Lower leg skin (tissue), 4 donors: ENCODE measurements at regions of chr1 and their contacts with region 1.

Region 1: DNA sequence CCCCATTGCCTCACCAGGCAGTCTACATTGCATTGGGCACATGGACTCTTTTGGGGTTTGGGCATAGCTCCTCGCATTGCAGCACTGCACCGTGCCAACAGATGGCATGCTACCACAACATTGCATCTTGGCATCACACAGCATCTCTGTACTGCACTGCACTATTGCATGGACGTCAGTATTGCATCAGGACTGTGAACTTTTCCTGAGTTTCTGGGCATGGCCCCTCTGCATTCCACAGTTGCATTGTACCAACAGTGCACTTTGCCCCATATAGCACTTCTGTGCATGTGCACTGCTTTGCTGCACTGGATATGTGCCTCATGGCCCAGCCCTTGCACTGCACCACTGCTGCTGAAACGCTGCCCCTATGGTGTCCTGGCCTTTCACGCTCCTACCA is 9.6 kb downstream of the PTPRU start:
- DNase-seq: no peak
- H3K4me3 ChIP-seq: no peak overlapping the region
- CTCF ChIP-seq: no peak
- POLR2A ChIP-seq: no peak

Region 2: GRCh38 chr1:29325675-29326074 is 79.8 kb after region 1 on chr1:
- intact Hi-C with region 1: loop called (anchors 2 kb)
- DNase-seq: no peak
- H3K4me3 ChIP-seq: no peak overlapping the region
- CTCF ChIP-seq: no peak
- POLR2A ChIP-seq: no peak

Region 3: GRCh38 chr1:29410476-29410875 is 164.6 kb after region 1 on chr1:
- intact Hi-C with region 1: loop called (anchors 5 kb)
- DNase-seq: peak in 1 of 2 donors; percentile 53
- H3K4me3 ChIP-seq: no peak overlapping the region
- CTCF ChIP-seq: no peak
- POLR2A ChIP-seq: no peak

Region 4: GRCh38 chr1:29703596-29704370 is 457.9 kb after region 1 on chr1:
- intact Hi-C with region 1: loop called (anchors 10 kb)
- DNase-seq: no peak
- H3K4me3 ChIP-seq: no peak overlapping the region
- CTCF ChIP-seq: no peak
- POLR2A ChIP-seq: no peak